Activated naive CD8-positive, alpha-beta T cell treated with anti-CD3 and anti-CD28 coated beads, Interleukin-2, amount 10 ng/mL, durations not matched to agents 7 days and 5 days (primary cell): ENCODE measurements at regions of chr12 and their contacts with region 1.

Region 1: GRCh38 chr12:68364893-68365725 is 32.9 kb upstream of the MDM1 start:
- DNase-seq: peak; percentile 82
- ATAC-seq: peak; percentile 94
- H3K4me3 Mint-ChIP-seq: peak overlapping the region; percentile 78
- H3K27ac Mint-ChIP-seq: peak overlapping the region; percentile 86
- H3K4me1 Mint-ChIP-seq: peaks cover 43% of the 10 kb centered on the region
- H3K27me3 Mint-ChIP-seq: no peaks in the 10 kb centered on the region

Region 2: GRCh38 chr12:68446893-68447796 is 82.0 kb after region 1 on chr12:
- POLR2A ChIA-PET with region 1: interaction called, 11 read pairs
- DNase-seq: no peak
- ATAC-seq: no peak
- H3K4me3 Mint-ChIP-seq: peak overlapping the region; percentile 43
- H3K27ac Mint-ChIP-seq: peak overlapping the region; percentile 35
- H3K4me1 Mint-ChIP-seq: peaks cover 63% of the 10 kb centered on the region
- H3K27me3 Mint-ChIP-seq: no peaks in the 10 kb centered on the region